ENCODE measurements at regions of chr15 and their contacts with region 1.

Region 1: GRCh38 chr15:77959432-77959879 is 118.1 kb downstream of the TBC1D2B start:
- DNase-seq: peak; percentile 94
- H3K4me3 Mint-ChIP-seq: peak overlapping the region; percentile 24
- H3K27ac Mint-ChIP-seq: no peak overlapping the region
- H3K4me1 Mint-ChIP-seq: peaks cover 10% of the 10 kb centered on the region
- H3K27me3 Mint-ChIP-seq: peaks cover 37% of the 10 kb centered on the region

Region 2: GRCh38 chr15:78018946-78019644 is 59.6 kb after region 1 on chr15:
- intact Hi-C with region 1: no loop called
- DNase-seq: peak; percentile 78
- H3K4me3 Mint-ChIP-seq: peak overlapping the region; percentile 32
- H3K27ac Mint-ChIP-seq: peak overlapping the region; percentile 30
- H3K4me1 Mint-ChIP-seq: peaks cover 25% of the 10 kb centered on the region
- H3K27me3 Mint-ChIP-seq: no peaks in the 10 kb centered on the region

Region 3: DNA sequence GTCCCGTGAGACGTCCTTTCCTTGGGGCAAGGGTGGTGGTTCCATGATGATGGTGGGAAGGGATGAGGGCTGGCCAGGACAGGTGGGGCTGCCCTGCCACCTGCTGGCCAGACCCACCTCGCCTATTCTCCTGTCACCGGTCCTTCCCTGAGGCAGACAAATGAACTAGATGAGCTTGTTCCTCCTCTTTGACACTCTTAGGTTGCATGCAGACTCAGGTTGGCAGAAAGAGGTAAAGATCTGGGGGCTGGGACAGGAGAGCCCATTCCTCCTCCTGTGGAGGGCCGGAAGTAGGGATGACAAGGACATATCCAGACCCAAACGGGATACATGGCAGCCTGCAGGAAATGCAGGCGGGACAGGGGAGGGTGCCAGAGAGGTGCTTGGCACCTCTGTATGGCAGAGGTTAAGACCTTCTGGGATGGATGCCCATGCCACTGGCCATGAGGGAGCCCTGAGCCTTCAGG is 236.3 kb after region 1 on chr15:
- intact Hi-C with region 1: loop called (anchors 1 kb)
- DNase-seq: peak; percentile 85
- H3K4me3 Mint-ChIP-seq: no peak overlapping the region
- H3K27ac Mint-ChIP-seq: no peak overlapping the region
- H3K4me1 Mint-ChIP-seq: peaks cover 3% of the 10 kb centered on the region
- H3K27me3 Mint-ChIP-seq: peaks cover 9% of the 10 kb centered on the region

Region 4: GRCh38 chr15:78241007-78241406 is 281.6 kb after region 1 on chr15:
- intact Hi-C with region 1: loop called (anchors 5 kb)
- DNase-seq: peak; percentile 94
- H3K4me3 Mint-ChIP-seq: no peak overlapping the region
- H3K27ac Mint-ChIP-seq: no peak overlapping the region
- H3K4me1 Mint-ChIP-seq: peaks cover 3% of the 10 kb centered on the region
- H3K27me3 Mint-ChIP-seq: peaks cover 5% of the 10 kb centered on the region

Measured in activated CD4-positive, alpha-beta T cell treated with anti-CD3 and anti-CD28 coated beads, Interleukin-2, amount 10 ng/mL, durations not matched to agents 24 days and 14 days (primary cell).